ENCODE measurements at regions of chr1 and their contacts with region 1.

Region 1: DNA sequence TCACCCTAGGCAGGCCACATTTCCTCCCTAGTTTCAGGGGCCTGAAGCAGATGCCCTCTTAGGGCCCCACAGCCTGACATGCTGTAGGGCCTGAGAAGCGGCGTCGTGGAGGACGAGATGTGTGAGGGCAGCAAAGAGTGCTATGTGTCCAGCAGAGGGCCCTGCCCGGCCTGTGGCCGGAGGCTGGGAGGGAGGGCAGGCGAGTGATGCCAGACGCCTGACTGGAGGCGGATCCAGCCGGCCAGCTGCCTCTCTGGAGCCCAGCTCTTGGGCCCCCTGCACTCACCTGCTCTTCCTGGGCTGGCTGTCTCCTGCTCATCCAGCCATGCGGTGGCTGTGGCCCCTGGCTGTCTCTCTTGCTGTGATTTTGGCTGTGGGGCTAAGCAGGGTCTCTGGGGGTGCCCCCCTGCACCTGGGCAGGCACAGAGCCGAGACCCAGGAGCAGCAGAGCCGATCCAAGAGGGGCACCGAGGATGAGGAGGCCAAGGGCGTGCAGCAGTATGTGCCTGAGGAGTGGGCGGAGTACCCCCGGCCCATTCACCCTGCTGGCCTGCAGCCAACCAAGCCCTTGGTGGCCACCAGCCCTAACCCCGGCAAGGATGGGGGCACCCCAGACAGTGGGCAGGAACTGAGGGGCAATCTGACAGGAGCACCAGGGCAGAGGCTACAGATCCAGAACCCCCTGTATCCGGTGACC is at the start of gene GPR37L1:
- DNase-seq: no peak
- H3K4me3 ChIP-seq: no peak within 1 kb of the TSS
- H3K4me1 ChIP-seq: no peaks in the 10 kb centered on the region
- H3K27me3 ChIP-seq: peaks cover 9% of the 10 kb centered on the region; the same call in 1 of the 2 replicates

Region 2: GRCh38 chr1:201982623-201983379 is 140.0 kb before region 1 on chr1 and contains the start of gene RNPEP:
- in situ Hi-C with region 1: no loop called
- DNase-seq: peak; percentile 63 to 89
- H3K4me3 ChIP-seq: peak within 1 kb of the TSS; percentile 87
- H3K4me1 ChIP-seq: peaks cover 5% of the 10 kb centered on the region; the same call in 1 of the 2 replicates
- H3K27me3 ChIP-seq: no peaks in the 10 kb centered on the region

Region 3: DNA sequence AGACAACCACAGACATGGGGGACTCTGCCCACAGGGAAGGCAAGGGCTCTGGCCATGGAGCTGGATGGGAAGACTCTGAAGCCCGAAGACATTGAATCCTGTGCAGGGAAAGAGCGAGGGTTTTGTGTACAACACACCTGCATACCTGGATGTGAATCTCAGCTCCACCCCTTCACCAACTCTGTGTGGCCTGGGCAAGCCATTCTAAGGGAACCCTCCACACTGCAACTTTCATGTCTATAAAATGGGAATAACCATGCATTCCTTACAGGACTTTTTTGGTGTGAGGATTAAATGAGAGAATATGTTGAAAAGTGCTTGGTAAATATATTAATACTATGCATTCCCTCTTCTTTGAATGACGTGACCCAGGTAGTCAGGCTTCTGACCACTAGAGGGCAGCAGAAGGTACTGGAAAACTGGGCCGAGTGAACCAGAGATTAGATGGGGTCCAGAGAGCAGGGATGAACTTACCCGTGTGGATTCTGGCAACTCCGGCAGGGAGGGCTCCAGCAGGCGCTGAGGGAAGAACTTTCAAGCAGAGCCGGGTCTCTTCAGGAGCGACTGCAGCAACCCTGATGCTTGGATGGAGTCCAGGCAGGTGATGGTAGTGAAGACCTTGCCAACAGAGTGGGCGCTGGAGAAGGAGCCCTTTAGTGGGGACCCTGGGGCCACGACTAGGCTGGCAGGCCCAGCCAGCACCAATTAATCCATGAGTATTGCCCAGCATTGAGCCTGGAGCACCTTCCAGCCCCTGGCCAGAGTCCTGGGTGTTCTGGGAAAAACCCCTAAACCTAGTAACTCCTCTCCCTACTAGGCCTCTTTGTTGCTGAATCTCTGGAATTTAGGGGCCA is 113.2 kb before region 1 on chr1:
- in situ Hi-C with region 1: loop called (anchors 5 kb)
- DNase-seq: peak; percentile 61 to 83
- H3K4me3 ChIP-seq: no peak overlapping the region
- H3K4me1 ChIP-seq: no peaks in the 10 kb centered on the region
- H3K27me3 ChIP-seq: no peaks in the 10 kb centered on the region

Measured in HAP-1 (cell line).